ENCODE measurements at regions of chr9 and their contacts with region 1.

Region 1: DNA sequence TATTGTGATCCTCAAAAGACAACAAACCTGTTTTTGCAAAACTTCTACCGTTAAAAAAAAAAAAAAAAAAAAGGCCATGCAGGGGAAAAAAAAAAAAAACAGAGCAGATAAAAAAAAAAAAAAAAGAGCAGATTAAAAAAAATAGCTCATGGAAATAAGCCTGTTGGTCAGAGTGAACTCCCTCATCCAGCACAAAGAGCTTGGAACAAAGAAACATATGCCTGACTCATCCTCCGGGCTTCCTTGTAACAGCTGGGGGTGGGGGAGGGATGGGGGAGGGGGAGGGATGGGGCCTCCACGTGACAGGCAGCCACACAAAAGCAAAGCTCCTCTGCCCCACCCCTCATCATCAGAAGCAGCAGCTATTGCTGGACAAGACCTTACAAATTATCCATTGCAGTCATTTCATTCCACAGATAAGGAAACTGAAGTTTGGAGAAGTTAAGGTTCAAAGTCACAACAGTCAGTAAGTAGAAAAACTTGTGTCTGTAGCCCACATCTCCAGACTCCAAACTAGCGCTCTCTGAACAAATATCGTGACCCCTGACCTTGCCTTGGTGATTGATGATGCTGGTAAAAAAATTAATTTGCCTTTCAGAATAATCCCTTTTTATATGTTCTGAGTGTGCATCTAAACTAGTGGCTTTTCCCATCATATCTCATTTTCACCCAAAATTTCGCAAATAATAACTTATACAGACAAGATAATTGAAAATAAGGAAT is 38.9 kb downstream of the SLC35D2 start:
- DNase-seq: peak; percentile 73
- ATAC-seq: peak; percentile 35
- H3K4me3 ChIP-seq: peak overlapping the region in 1 of 2 experiments; percentile 15; a peak in 1 of 4 replicates
- H3K27ac ChIP-seq: peak overlapping the region; percentile 91; the same call in 1 of the 2 replicates
- H3K4me1 ChIP-seq: peaks cover 48 to 58% of the 10 kb centered on the region in 2 experiments
- H3K27me3 ChIP-seq: no peaks in the 10 kb centered on the region
- CTCF ChIP-seq: no peak
- POLR2A ChIP-seq: no peak
- RAD21 ChIP-seq: no peak

Region 2: DNA sequence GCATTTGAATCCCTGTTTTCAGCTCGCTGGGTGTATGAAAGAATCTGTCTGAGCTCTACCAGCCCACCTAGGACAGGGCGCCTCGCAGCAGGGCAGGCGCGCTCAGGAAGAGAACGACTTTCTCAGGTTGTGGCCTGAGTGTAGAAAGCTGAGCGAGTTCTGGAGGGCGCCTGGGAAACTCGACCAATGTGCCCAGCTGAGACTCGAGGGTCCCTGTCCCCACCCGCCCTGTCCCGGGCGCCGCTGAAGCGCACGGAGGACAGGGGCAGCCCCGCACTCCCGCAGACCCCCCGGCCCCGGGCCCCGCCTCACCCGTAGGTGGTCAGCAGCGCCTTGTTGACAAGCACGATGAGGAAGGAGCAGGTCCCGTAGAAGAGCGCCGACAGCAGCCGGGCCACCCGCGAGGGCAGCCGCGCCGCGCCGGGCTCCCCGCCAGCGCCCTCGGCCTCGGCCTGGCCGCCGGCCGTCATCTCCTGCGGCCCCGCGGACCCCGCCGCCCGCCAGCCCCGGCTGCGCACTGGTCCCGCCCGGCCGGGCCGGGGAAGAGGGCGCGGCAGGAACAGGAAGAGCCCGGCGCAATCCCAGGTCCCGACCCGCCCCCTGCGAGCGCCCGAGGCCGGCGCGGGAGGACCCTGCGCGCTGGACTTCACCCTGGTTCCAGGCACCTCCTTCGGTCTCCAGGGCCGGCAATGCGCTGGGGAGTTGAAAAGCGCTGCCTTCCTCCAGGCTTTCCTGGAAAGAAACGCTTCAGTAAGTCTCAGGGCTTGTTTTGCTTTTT is 38.7 kb after region 1 on chr9 and contains the start of gene SLC35D2:
- CTCF ChIA-PET with region 1: no interaction called
- POLR2A ChIA-PET with region 1: no interaction called
- RAD21 ChIA-PET with region 1: no interaction called
- intact Hi-C with region 1: loop called (anchors 5 kb)
- DNase-seq: no peak
- ATAC-seq: peak; percentile 92
- H3K4me3 ChIP-seq: peak within 1 kb of the TSS; percentile 59 to 71
- H3K27ac ChIP-seq: peak within 1 kb of the TSS; percentile 43
- H3K4me1 ChIP-seq: peaks cover 26 to 46% of the 10 kb centered on the region in 2 experiments
- H3K27me3 ChIP-seq: no peaks in the 10 kb centered on the region
- CTCF ChIP-seq: no peak
- POLR2A ChIP-seq: no peak
- RAD21 ChIP-seq: no peak
- total RNA-seq, gene SLC35D2: 32.5 TPM

Region 3: DNA sequence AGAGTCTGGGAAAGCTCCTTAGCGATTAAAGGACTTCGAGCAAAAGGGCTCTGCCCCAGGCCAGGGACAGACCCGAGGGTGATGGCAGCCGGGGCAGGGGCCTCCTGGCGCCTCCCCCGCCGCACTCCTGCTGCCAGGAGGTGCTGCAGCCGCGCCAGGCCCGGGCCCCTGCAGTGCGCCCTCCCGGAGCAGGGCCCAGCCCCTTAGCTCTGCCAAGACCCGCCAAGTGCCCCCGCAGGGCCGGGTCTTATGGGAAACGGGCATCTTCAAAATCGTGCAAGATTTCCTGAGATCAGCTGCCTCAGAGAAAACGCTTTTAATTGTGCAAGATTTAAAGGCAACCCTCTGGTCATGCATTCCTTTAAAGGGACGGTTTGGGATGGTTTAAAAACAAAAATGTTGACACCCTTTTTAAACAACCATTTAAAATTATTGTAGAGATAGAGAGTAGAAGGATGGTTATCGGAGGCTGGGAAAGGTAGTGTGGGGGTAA is 222.6 kb after region 1 on chr9:
- CTCF ChIA-PET with region 1: no interaction called
- POLR2A ChIA-PET with region 1: no interaction called
- RAD21 ChIA-PET with region 1: no interaction called
- intact Hi-C with region 1: no loop called
- DNase-seq: no peak
- ATAC-seq: peak; percentile 31
- H3K4me3 ChIP-seq: peak overlapping the region; percentile 49 to 65
- H3K27ac ChIP-seq: peak overlapping the region; percentile 61; the same call in 1 of the 2 replicates
- H3K4me1 ChIP-seq: peaks cover 21 to 27% of the 10 kb centered on the region in 2 experiments
- H3K27me3 ChIP-seq: 0 out of 2 replicates have a peak, but pooled peaks cover 10% of the 10 kb centered on the region
- CTCF ChIP-seq: no peak
- POLR2A ChIP-seq: no peak
- RAD21 ChIP-seq: no peak

Measured in HCT116 (cell line).